Dorsolateral prefrontal cortex (tissue), 120 donors: ENCODE measurements at regions of chr17 and their contacts with region 1.

Region 1: GRCh38 chr17:42997984-42998938 is at the start of gene RPL27:
- DNase-seq: peak; percentile 97 to 100 (median 99)
- H3K4me3 ChIP-seq: peak within 1 kb of the TSS; percentile 63 to 97 (median 80)
- H3K27ac ChIP-seq: peak within 1 kb of the TSS; percentile 55 to 95 (median 86)
- H3K27me3 ChIP-seq: no peaks in the 10 kb centered on the region
- CTCF ChIP-seq: peak; percentile 84 to 100 (median 95)
- total RNA-seq, gene RPL27: 211 to 416 (median 275) TPM

Region 2: GRCh38 chr17:42832974-42833766 is 165.1 kb before region 1 on chr17 and contains the start of gene PSME3:
- intact Hi-C with region 1: loop called in 1 of 2 experiments (anchors 1 kb)
- DNase-seq: peak; percentile 87 to 95 (median 91)
- H3K4me3 ChIP-seq: peak within 1 kb of the TSS; percentile 71 to 100 (median 96)
- H3K27ac ChIP-seq: peak within 1 kb of the TSS; percentile 47 to 96 (median 86)
- H3K27me3 ChIP-seq: no peaks in the 10 kb centered on the region
- CTCF ChIP-seq: peak in 35 of 56 donors; percentile 3 to 67 (median 30)
- total RNA-seq, gene PSME3: 55.1 to 109 (median 84.1) TPM

Region 3: GRCh38 chr17:42843358-42843934 is 154.8 kb before region 1 on chr17:
- intact Hi-C with region 1: loop called (anchors 5 to 10 kb)
- DNase-seq: peak in 1 of 10 donors; percentile 57
- H3K4me3 ChIP-seq: no peak overlapping the region
- H3K27ac ChIP-seq: no peak overlapping the region
- H3K27me3 ChIP-seq: no peaks in the 10 kb centered on the region
- CTCF ChIP-seq: peak; percentile 65 to 93 (median 81)

Region 4: DNA sequence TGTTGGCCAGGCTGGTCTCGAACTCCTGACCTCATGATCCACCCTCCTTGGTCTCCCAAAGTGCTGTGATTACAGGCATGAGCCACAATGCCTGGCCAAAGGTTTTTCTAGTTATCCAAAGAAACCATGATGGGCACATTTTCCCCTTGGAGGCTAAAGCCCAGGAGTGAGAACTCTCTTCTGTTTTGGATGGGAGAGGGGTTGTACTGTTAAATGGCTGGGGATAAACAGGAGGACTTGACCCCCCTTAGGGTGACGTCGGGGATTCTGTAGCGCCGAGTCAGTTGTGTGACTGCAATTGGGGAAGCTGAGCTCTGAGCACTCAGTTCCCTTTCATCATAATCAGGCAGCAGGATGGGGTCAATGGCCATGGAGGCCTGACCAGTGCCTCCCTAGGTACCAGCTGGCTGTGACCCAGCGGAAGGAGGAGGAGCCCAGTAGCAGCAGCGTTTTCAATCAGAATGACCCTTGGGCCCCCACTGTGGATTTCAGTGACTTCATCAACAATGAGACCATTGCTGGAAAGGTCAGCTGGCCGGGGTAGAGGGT is 143.1 kb before region 1 on chr17:
- intact Hi-C with region 1: no loop called
- DNase-seq: no peak
- H3K4me3 ChIP-seq: no peak overlapping the region
- H3K27ac ChIP-seq: no peak overlapping the region
- H3K27me3 ChIP-seq: no peaks in the 10 kb centered on the region
- CTCF ChIP-seq: no peak

Region 5: GRCh38 chr17:42964161-42964932 is 33.9 kb before region 1 on chr17 and contains the start of gene AARSD1:
- intact Hi-C with region 1: loop called in 1 of 2 experiments (anchors 1 kb)
- DNase-seq: peak; percentile 83 to 94 (median 90)
- H3K4me3 ChIP-seq: peak within 1 kb of the TSS; percentile 57 to 95 (median 83)
- H3K27ac ChIP-seq: peak within 1 kb of the TSS; percentile 18 to 94 (median 82)
- H3K27me3 ChIP-seq: no peaks in the 10 kb centered on the region
- CTCF ChIP-seq: peak in 36 of 56 donors; percentile 5 to 50 (median 24)
- total RNA-seq, gene AARSD1: 35.7 to 86.0 (median 53.9) TPM

Region 6: DNA sequence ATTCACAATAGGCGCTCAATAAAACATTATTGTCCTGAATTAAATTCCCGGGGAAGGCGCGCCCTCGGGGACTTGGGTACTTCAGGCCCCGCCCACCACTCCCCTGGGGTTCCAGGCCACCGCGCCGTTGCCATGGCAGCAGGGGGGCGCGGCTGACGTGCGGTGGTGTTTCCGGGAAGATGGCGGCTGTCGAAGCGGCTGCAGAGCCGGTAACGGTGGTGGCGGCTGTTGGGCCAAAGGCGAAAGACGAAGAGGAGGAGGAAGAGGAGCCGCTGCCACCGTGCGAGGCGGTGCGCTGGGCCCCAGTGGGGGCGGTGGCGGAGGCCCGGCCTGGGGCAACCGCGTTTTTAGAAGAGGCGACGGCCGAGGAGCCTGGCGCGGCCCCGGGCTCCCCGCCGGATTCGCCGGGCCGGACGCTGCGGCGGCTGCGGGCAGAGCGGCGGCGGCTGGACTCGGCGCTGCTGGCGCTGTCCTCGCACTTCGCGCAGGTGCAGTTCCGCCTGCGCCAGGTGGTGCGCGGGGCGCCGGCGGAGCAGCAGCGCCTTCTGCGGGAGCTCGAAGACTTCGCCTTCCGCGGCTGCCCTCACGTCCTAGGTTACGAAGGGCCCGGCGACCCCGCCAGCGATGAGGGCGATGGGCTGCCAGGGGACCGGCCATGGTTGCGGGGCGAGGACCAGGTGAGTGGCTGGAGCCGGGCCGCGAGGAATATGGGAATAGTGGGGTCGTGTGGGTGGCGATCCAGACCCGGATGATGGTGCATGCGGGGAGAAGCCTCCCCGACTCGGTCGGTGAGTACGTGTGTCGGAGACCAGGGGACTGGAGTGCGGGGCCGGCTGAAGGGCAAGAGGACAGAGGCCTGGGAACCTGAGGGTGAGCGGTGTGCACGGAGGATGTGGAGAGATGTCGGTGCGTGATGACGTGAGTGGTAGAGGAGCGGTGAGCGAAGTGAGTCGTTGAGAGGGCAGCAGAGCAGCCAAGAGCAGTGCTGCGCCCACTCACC is 17.6 kb before region 1 on chr17 and contains the start of gene RUNDC1:
- intact Hi-C with region 1: loop called in 1 of 2 experiments (anchors 2 kb)
- DNase-seq: peak; percentile 83 to 93 (median 90)
- H3K4me3 ChIP-seq: peak within 1 kb of the TSS; percentile 68 to 99 (median 88)
- H3K27ac ChIP-seq: peak within 1 kb of the TSS in 57 of 59 donors; percentile 30 to 92 (median 80)
- H3K27me3 ChIP-seq: no peaks in the 10 kb centered on the region
- CTCF ChIP-seq: peak in 15 of 56 donors; percentile 3 to 42 (median 16)
- total RNA-seq, gene RUNDC1: 15.4 to 42.1 (median 27.2) TPM

Region 7: GRCh38 chr17:43125133-43125966 is 127.1 kb after region 1 on chr17 and contains the start of gene BRCA1:
- intact Hi-C with region 1: loop called in 1 of 2 experiments (anchors 10 kb)
- DNase-seq: peak; percentile 67 to 94 (median 90)
- H3K4me3 ChIP-seq: peak within 1 kb of the TSS; percentile 57 to 95 (median 78)
- H3K27ac ChIP-seq: peak within 1 kb of the TSS in 49 of 59 donors; percentile 4 to 88 (median 72)
- H3K27me3 ChIP-seq: no peaks in the 10 kb centered on the region
- CTCF ChIP-seq: peak in 31 of 56 donors; percentile 9 to 47 (median 26)
- total RNA-seq, gene BRCA1: 3.9 to 29.8 (median 9.9) TPM

Region 8: DNA sequence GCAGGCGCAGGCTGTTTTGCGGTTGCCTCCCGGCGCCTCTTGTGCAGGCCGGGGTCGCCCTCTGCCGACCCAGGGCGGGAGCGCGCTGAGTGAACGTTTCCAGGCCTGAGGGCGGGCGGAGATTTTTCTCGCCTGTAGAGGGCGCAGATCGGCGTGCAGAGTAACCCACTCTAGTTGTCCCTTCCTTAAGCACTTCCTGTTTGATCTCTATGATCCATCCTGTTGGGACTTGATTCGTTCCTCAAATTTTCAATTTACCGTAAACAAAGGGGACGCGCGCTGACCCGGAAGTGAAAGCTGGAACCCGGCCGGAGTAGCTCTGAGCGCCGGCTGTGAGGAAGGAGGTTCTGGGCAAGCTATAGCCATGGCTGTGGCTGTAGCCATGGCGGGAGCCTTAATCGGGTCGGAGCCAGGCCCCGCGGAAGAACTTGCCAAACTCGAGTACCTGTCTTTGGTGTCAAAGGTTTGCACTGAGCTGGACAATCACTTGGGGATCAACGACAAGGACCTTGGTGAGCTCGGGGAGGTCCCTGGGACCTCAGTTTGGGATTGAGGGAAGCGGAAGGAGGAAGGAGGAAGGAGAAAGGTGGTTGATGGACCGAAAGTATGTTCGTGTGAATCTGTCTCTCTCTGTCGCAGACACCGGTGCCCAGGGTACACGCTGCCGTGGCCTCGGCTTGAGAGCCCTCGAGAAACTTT is 485.6 kb after region 1 on chr17 and contains the start of gene DHX8:
- intact Hi-C with region 1: loop called in 1 of 2 experiments (anchors 10 kb)
- DNase-seq: peak; percentile 92 to 98 (median 96)
- H3K4me3 ChIP-seq: peak within 1 kb of the TSS; percentile 45 to 99 (median 84)
- H3K27ac ChIP-seq: peak within 1 kb of the TSS; percentile 43 to 98 (median 91)
- H3K27me3 ChIP-seq: no peaks in the 10 kb centered on the region
- CTCF ChIP-seq: peak; percentile 100
- total RNA-seq, gene DHX8: 32.7 to 69.3 (median 46.7) TPM